ENCODE measurements at regions of chr9 and their contacts with region 1.

Region 1: GRCh38 chr9:75946726-75947125 is 56.3 kb downstream of the PCSK5 start:
- DNase-seq: no peak
- H3K4me3 ChIP-seq: no peak overlapping the region
- H3K27ac ChIP-seq: no peak overlapping the region
- H3K4me1 ChIP-seq: no peaks in the 10 kb centered on the region
- H3K27me3 ChIP-seq: no peaks in the 10 kb centered on the region
- CTCF ChIP-seq: no peak
- POLR2A ChIP-seq: no peak

Region 2: GRCh38 chr9:75933982-75934381 is 12.7 kb before region 1 on chr9:
- CTCF ChIA-PET with region 1: no interaction called
- POLR2A ChIA-PET with region 1: no interaction called
- dilution Hi-C with region 1: no loop called
- intact Hi-C with region 1: loop called (anchors 2 kb)
- DNase-seq: no peak
- H3K4me3 ChIP-seq: no peak overlapping the region
- H3K27ac ChIP-seq: no peak overlapping the region
- H3K4me1 ChIP-seq: no peaks in the 10 kb centered on the region
- H3K27me3 ChIP-seq: no peaks in the 10 kb centered on the region
- CTCF ChIP-seq: no peak
- POLR2A ChIP-seq: no peak

Region 3: DNA sequence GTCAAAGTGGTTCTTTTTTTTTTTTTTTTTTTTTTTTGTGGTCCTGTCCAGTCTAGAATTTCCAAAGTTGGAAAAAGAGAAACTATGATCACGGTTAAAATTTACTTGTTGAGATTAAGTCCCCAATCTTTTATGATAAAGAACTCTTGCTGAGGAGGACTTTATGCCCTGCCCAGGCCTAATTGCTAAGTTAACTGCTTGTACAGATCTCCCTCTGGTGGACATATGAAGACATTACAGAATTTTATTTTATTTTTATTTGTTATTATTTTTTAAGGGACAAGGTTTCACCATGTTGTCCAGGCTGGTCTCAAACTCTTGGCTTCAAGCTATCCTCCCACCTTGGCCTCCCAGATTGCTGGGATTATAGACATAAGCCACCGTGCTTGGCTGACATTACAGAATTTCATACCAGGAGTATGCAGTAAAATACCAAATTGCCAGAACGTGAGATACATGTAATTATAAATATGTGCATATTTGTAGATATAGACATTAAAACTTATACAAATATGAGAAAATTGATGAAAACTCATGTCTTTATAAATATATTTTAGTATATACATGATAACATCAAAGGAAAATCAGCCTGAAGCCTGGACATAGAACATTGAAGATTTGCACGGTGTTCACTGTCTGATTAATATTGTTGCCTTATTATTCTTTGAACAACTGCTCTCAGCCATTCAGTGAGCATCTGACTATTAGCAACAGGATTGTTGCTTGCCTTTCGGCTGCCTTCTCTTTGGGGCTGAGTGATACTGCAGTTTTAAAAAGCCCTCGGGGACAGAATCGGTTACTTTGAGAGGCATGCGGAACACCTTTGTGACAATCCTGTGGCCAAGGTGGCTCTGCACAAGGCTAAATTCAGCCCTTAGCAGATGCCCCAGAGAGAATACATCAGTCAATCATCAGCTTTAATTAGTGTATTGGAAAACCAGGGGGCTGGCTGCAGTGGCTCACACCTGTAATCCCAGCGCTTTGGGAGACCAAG is 356.5 kb after region 1 on chr9:
- CTCF ChIA-PET with region 1: no interaction called
- POLR2A ChIA-PET with region 1: no interaction called
- dilution Hi-C with region 1: no loop called
- intact Hi-C with region 1: no loop called
- DNase-seq: peak; percentile 58
- H3K4me3 ChIP-seq: no peak overlapping the region
- H3K27ac ChIP-seq: no peak overlapping the region
- H3K4me1 ChIP-seq: no peaks in the 10 kb centered on the region
- H3K27me3 ChIP-seq: peaks cover 4 to 7% of the 10 kb centered on the region in 2 experiments
- CTCF ChIP-seq: peak; percentile 20 to 27
- POLR2A ChIP-seq: no peak

Region 4: DNA sequence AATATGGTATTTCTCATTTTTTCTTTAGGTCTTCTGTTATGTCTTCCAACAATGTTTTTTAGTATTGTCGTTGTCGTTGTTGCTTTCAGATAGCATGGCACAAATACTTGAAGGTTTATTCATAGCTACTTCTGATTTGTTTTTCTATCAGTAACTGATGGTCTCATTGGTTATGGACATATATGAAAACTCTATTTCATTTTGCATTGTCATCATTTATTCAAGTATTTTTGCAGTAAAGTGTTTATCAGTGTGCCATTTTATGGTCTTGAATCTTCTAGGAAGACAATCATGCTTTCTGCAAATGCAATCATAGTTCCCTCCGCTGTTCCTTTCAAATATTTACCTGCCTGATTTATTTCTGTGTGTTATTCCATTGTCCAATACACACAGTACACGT is 1003.1 kb after region 1 on chr9:
- CTCF ChIA-PET with region 1: no interaction called
- POLR2A ChIA-PET with region 1: no interaction called
- dilution Hi-C with region 1: no loop called
- intact Hi-C with region 1: loop called (anchors 5 kb)
- DNase-seq: no peak
- H3K4me3 ChIP-seq: no peak overlapping the region
- H3K27ac ChIP-seq: no peak overlapping the region
- H3K4me1 ChIP-seq: no peaks in the 10 kb centered on the region
- H3K27me3 ChIP-seq: peaks cover 0 to 1% of the 10 kb centered on the region in 2 experiments
- CTCF ChIP-seq: no peak
- POLR2A ChIP-seq: no peak